CD8-positive, alpha-beta T cell (primary cell): ENCODE measurements at regions of chr5 and their contacts with region 1.

Region 1: DNA sequence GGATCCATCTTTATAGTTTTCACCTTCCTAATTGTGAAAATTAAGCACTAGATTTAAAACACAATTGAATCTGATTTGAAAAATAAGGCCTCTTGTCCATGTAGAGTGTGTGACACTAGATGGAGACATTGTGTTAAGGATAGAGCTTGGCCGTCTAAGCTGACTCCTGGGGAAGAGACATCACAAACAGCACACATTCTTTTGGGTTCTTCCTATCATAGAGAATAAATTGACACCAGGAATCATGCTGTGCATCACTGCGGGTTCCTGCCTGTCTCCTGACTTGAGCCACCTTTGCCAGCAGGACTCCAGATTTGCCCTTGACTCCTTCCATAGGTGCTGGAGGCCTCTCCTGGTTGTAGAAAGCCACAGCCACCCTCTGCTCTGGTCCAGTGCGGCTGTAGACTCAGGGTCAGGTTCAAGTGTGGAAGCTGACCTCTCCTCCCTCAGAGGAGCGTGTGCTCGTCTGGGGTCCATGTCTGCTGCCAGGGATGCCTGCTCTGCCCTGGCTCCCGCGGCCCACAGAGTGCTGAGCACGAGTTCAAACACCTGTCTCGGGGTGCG is 11.2 kb downstream of the ROPN1L start:
- DNase-seq: peak in 2 of 9 experiments; percentile 67 to 76
- ATAC-seq: peak; percentile 46
- H3K4me3 ChIP-seq: no peak overlapping the region
- H3K4me3 Mint-ChIP-seq: no peak overlapping the region
- H3K27ac ChIP-seq: no peak overlapping the region
- H3K27ac Mint-ChIP-seq: no peak overlapping the region
- H3K4me1 ChIP-seq: no peaks in the 10 kb centered on the region
- H3K4me1 Mint-ChIP-seq: peaks cover 15% of the 10 kb centered on the region
- H3K27me3 ChIP-seq: no peaks in the 10 kb centered on the region
- H3K27me3 Mint-ChIP-seq: no peaks in the 10 kb centered on the region
- CTCF ChIP-seq: peak; percentile 47

Region 2: GRCh38 chr5:10377081-10377480 is 75.8 kb before region 1 on chr5:
- CTCF ChIA-PET with region 1: no interaction called
- POLR2A ChIA-PET with region 1: no interaction called
- intact Hi-C with region 1: no loop called
- DNase-seq: peak in 4 of 9 experiments; percentile 15 to 54 (median 28)
- ATAC-seq: peak; percentile 44
- H3K4me3 ChIP-seq: no peak overlapping the region
- H3K4me3 Mint-ChIP-seq: peak overlapping the region; percentile 26
- H3K27ac ChIP-seq: no peak overlapping the region
- H3K27ac Mint-ChIP-seq: no peak overlapping the region
- H3K4me1 ChIP-seq: peaks cover 33% of the 10 kb centered on the region
- H3K4me1 Mint-ChIP-seq: peaks cover 67% of the 10 kb centered on the region
- H3K27me3 ChIP-seq: no peaks in the 10 kb centered on the region
- H3K27me3 Mint-ChIP-seq: no peaks in the 10 kb centered on the region
- CTCF ChIP-seq: no peak

Region 3: GRCh38 chr5:10627160-10627701 is 174.4 kb after region 1 on chr5:
- CTCF ChIA-PET with region 1: interaction called, 79 read pairs
- POLR2A ChIA-PET with region 1: no interaction called
- intact Hi-C with region 1: loop called (anchors 1 kb)
- DNase-seq: peak in 1 of 9 experiments; percentile 21
- ATAC-seq: no peak
- H3K4me3 ChIP-seq: peak overlapping the region; percentile 33 to 61
- H3K4me3 Mint-ChIP-seq: peak overlapping the region; percentile 82
- H3K27ac ChIP-seq: no peak overlapping the region
- H3K27ac Mint-ChIP-seq: peak overlapping the region; percentile 61
- H3K4me1 ChIP-seq: peaks cover 7% of the 10 kb centered on the region
- H3K4me1 Mint-ChIP-seq: peaks cover 17% of the 10 kb centered on the region
- H3K27me3 ChIP-seq: no peaks in the 10 kb centered on the region
- H3K27me3 Mint-ChIP-seq: no peaks in the 10 kb centered on the region
- CTCF ChIP-seq: no peak

Region 4: DNA sequence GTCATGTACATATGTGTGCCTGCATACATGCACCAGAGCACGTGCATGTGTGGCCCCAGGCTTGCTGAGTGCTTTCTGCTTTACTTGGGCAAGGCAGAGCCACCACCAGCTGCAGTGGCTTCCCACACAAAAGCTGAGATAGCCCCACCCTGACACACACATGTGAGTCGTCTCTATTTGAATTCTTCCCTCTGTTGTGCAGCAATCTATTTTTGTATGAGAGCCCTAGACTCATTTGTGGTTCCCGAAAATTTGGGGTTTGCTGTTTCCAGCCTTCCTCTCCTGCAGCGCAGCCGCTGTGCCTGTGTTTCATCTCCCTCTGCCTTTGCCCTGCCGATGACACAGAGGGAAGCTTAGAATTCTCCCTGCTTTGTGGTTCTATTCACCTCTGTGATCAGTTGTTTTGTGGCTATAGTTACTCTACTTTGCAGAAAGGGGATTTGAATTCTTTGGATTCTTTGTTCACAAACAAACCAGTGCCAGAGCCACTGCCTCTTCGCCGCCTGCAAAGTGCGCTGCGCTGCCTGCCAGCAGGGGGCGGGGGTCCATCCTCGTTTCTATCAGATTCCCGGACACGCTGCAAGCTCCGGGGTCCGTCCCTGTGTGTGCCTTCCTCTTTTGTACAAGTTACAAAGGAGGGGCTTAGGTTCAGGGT is 404.0 kb after region 1 on chr5:
- CTCF ChIA-PET with region 1: no interaction called
- POLR2A ChIA-PET with region 1: no interaction called
- intact Hi-C with region 1: loop called in 1 of 2 experiments (anchors 10 kb)
- DNase-seq: peak in 4 of 9 experiments; percentile 6 to 22 (median 20)
- ATAC-seq: no peak
- H3K4me3 ChIP-seq: no peak overlapping the region
- H3K4me3 Mint-ChIP-seq: no peak overlapping the region
- H3K27ac ChIP-seq: no peak overlapping the region
- H3K27ac Mint-ChIP-seq: no peak overlapping the region
- H3K4me1 ChIP-seq: no peaks in the 10 kb centered on the region
- H3K4me1 Mint-ChIP-seq: no peaks in the 10 kb centered on the region
- H3K27me3 ChIP-seq: no peaks in the 10 kb centered on the region
- H3K27me3 Mint-ChIP-seq: peaks cover 14% of the 10 kb centered on the region
- CTCF ChIP-seq: peak; percentile 41

Region 5: GRCh38 chr5:11371021-11371420 is 918.2 kb after region 1 on chr5:
- CTCF ChIA-PET with region 1: no interaction called
- POLR2A ChIA-PET with region 1: no interaction called
- intact Hi-C with region 1: no loop called
- DNase-seq: no peak
- ATAC-seq: no peak
- H3K4me3 ChIP-seq: no peak overlapping the region
- H3K4me3 Mint-ChIP-seq: no peak overlapping the region
- H3K27ac ChIP-seq: no peak overlapping the region
- H3K27ac Mint-ChIP-seq: no peak overlapping the region
- H3K4me1 ChIP-seq: no peaks in the 10 kb centered on the region
- H3K4me1 Mint-ChIP-seq: no peaks in the 10 kb centered on the region
- H3K27me3 ChIP-seq: no peaks in the 10 kb centered on the region
- H3K27me3 Mint-ChIP-seq: no peaks in the 10 kb centered on the region
- CTCF ChIP-seq: no peak

Region 6: GRCh38 chr5:12023614-12024241 is 1570.9 kb after region 1 on chr5:
- CTCF ChIA-PET with region 1: no interaction called
- POLR2A ChIA-PET with region 1: no interaction called
- intact Hi-C with region 1: loop called in 1 of 2 experiments (anchors 5 kb)
- DNase-seq: peak in 1 of 9 experiments; percentile 3
- ATAC-seq: no peak
- H3K4me3 ChIP-seq: no peak overlapping the region
- H3K4me3 Mint-ChIP-seq: no peak overlapping the region
- H3K27ac ChIP-seq: no peak overlapping the region
- H3K27ac Mint-ChIP-seq: no peak overlapping the region
- H3K4me1 ChIP-seq: no peaks in the 10 kb centered on the region
- H3K4me1 Mint-ChIP-seq: no peaks in the 10 kb centered on the region
- H3K27me3 ChIP-seq: no peaks in the 10 kb centered on the region
- H3K27me3 Mint-ChIP-seq: no peaks in the 10 kb centered on the region
- CTCF ChIP-seq: peak; percentile 15